Activated naive CD4-positive, alpha-beta T cell treated with anti-CD3 and anti-CD28 coated beads for 36 hours (primary cell): ENCODE measurements at regions of chr11 and their contacts with region 1.

Region 1: GRCh38 chr11:44565211-44565952 is at the start of gene CD82:
- DNase-seq: peak; percentile 99
- H3K4me3 Mint-ChIP-seq: peak within 1 kb of the TSS; percentile 83
- H3K27ac Mint-ChIP-seq: peak within 1 kb of the TSS; percentile 93
- H3K4me1 Mint-ChIP-seq: peaks cover 51% of the 10 kb centered on the region
- H3K27me3 Mint-ChIP-seq: no peaks in the 10 kb centered on the region
- total RNA-seq, gene CD82: 140 to 141 TPM

Region 2: DNA sequence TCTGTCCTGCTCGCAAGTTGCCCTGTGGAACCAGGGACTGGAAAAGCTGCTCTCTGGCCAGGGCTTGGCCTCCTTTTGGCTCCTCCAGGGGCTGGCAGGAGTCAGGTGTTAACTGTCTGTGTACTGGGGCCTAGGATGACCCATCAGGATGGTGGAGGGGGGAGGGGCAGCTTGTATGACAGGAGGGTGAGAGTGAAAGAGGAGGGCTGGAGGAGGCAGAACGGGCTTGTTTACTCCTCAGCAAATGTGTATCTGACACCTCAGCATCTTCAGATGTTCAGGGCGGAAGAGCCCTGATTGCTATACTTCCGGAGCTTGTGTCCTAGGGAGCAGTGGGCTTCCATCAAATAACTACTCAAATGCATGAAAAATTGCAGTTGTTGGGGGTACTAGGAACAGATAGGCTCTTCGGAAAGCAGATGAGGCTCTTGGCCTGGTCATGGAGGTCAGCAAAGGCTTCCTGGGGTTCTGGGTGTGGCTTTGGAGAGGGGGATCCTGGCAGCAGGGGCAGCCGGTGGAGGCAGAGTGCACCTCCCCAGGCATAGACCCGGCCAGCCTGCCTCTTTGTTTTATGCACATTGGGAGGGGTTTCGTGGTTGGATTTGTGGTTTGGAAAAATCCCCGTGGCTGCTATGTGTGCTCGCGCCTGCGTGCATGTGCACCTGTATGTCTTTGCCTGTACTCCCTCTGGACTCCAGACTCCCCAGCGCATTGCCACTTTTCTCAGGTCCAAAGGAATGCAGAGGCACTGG is 31.3 kb after region 1 on chr11:
- CTCF ChIA-PET with region 1: interaction called, 3 read pairs
- intact Hi-C with region 1: loop called (anchors 1 kb)
- DNase-seq: peak; percentile 89
- H3K4me3 Mint-ChIP-seq: peak overlapping the region; percentile 39
- H3K27ac Mint-ChIP-seq: peak overlapping the region; percentile 88
- H3K4me1 Mint-ChIP-seq: peaks cover 81% of the 10 kb centered on the region
- H3K27me3 Mint-ChIP-seq: no peaks in the 10 kb centered on the region

Region 3: DNA sequence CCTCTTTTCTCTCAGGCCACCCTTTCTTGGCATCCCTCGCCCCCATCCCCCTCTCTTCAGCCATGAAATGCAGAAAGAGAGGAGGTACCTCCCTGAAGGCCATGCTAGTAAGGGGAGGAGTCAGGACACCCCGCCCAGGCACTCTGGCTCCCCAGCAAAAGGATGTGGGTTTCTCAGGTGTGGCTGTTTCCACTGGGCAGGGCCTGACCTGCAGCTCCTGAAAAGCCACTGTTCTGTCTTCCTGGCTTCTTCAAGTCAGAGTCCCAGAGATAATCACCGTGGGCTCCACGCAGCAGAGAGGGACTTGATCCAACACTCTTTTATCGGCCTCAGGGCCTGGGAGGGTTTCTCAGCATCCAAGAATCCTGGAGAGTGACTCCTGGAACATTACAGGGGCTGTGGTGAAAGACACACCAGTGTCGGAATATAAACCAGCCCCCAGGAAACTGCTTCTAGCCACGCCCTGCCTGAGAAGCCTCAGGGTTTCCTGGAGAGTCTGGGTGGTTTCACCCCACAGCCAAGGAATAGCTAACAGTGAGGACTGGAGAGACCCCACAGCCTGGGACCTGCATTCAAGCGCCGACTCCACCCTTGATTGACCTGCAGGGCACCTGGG is 115.7 kb after region 1 on chr11:
- CTCF ChIA-PET with region 1: no interaction called
- intact Hi-C with region 1: loop called (anchors 2 kb)
- DNase-seq: peak; percentile 86
- H3K4me3 Mint-ChIP-seq: peak overlapping the region; percentile 20
- H3K27ac Mint-ChIP-seq: peak overlapping the region; percentile 71
- H3K4me1 Mint-ChIP-seq: peaks cover 43% of the 10 kb centered on the region
- H3K27me3 Mint-ChIP-seq: no peaks in the 10 kb centered on the region

Region 4: GRCh38 chr11:44709966-44710365 is 144.6 kb after region 1 on chr11:
- CTCF ChIA-PET with region 1: no interaction called
- intact Hi-C with region 1: no loop called
- DNase-seq: no peak
- H3K4me3 Mint-ChIP-seq: no peak overlapping the region
- H3K27ac Mint-ChIP-seq: no peak overlapping the region
- H3K4me1 Mint-ChIP-seq: peaks cover 26% of the 10 kb centered on the region
- H3K27me3 Mint-ChIP-seq: no peaks in the 10 kb centered on the region

Region 5: DNA sequence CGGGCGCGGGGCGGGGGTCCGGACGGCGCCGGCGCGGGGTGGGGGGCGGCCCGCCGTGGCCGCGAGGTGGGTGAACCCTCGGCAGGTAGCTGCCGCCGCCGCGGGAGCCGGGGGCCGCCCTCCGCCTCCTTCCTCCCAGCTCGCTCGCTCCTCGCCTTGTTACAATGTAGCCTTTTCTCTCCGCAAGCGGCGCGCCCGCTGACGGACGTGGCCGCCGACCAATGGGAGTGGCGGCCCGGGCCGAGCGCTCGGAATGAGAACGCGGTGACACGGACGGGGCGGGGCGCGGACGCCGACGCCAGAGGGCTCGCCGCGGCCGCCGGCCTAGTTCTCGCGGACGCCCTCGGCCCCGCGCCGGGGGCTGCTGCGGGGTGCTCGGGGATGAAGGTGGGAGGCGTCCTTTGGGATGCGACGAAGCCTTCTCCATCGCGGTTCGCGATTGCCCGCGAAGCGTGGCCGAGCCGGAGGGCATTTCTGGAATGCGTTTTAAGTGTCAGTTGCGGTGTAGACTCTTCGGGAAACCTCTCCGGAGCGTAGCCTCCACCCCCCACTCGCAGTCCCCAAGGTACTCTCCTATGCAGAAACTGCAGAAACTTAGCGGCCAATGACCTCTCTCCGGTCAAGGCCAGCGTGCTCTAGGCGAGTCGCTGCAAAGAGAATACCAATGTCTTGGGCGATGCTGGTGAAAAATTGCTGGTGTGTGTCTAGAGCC is 581.8 kb after region 1 on chr11:
- CTCF ChIA-PET with region 1: no interaction called
- intact Hi-C with region 1: loop called (anchors 2 kb)
- DNase-seq: peak; percentile 92
- H3K4me3 Mint-ChIP-seq: peak overlapping the region; percentile 84
- H3K27ac Mint-ChIP-seq: peak overlapping the region; percentile 22
- H3K4me1 Mint-ChIP-seq: peaks cover 14% of the 10 kb centered on the region
- H3K27me3 Mint-ChIP-seq: peaks cover 9% of the 10 kb centered on the region